ENCODE measurements at regions of chr12 and their contacts with region 1.

Region 1: GRCh38 chr12:96578526-96579125 is 89.2 kb downstream of the CFAP54 start:
- DNase-seq: peak in 3 of 9 experiments; percentile 4 to 76 (median 68)
- ATAC-seq: peak; percentile 81
- H3K4me3 ChIP-seq: no peak overlapping the region
- H3K4me3 Mint-ChIP-seq: no peak overlapping the region
- H3K27ac ChIP-seq: no peak overlapping the region
- H3K27ac Mint-ChIP-seq: no peak overlapping the region
- H3K4me1 ChIP-seq: no peaks in the 10 kb centered on the region
- H3K4me1 Mint-ChIP-seq: no peaks in the 10 kb centered on the region
- H3K27me3 ChIP-seq: no peaks in the 10 kb centered on the region
- H3K27me3 Mint-ChIP-seq: peaks cover 5% of the 10 kb centered on the region
- CTCF ChIP-seq: peak; percentile 80

Region 2: DNA sequence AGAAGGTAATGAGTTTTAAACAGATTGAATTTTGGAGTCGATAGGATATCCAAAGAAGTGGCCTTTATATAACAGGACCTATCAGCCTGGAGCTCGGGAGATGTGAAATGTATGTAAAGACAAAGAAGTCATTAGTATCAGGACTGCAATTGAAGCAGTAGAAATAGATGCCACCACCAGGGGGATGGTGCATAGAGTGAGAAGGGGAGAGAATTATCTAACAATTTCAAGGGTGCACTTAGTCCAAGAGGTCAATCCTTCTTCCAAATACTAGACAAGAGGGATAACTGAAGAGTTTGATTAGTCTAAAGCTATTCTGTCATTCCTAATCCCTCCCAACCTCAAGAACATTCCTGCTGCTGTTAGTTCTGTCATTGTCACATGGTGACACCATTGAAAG is 38.6 kb after region 1 on chr12:
- CTCF ChIA-PET with region 1: no interaction called
- POLR2A ChIA-PET with region 1: no interaction called
- intact Hi-C with region 1: loop called in 1 of 2 experiments (anchors 1 kb)
- DNase-seq: no peak
- ATAC-seq: no peak
- H3K4me3 ChIP-seq: no peak overlapping the region
- H3K4me3 Mint-ChIP-seq: no peak overlapping the region
- H3K27ac ChIP-seq: no peak overlapping the region
- H3K27ac Mint-ChIP-seq: no peak overlapping the region
- H3K4me1 ChIP-seq: no peaks in the 10 kb centered on the region
- H3K4me1 Mint-ChIP-seq: no peaks in the 10 kb centered on the region
- H3K27me3 ChIP-seq: no peaks in the 10 kb centered on the region
- H3K27me3 Mint-ChIP-seq: peaks cover 15% of the 10 kb centered on the region
- CTCF ChIP-seq: no peak

Region 3: DNA sequence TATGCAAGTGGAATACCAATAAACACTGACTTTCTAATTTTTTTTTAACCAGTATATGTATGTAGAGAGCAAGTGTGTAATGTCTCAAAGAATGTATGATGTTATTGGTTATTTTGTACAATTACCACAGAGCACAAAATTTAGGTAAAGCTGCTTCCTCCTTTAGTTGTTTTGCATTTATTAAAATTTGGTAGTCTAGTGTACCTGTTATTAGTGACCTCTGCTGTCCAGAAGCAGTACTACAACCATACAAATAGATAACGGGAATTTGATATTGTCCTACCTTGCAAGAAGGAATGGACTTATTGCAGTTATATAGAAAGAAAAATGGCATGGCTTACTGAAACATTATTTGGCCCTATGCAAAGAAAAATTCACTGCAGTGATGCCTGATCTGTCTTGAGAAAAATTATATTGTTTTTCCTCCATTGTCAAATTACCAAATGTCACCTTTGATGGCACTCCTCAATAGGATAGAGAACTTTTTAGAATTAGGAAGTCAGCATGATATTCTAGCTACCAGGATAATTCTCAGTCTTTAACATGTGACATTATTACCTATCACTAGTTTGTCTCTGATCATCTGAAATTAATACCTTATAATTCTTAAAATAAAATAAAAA is 730.1 kb after region 1 on chr12:
- CTCF ChIA-PET with region 1: interaction called, 72 read pairs
- POLR2A ChIA-PET with region 1: no interaction called
- intact Hi-C with region 1: loop called (anchors 1 kb)
- DNase-seq: peak in 3 of 9 experiments; percentile 16 to 71 (median 64)
- ATAC-seq: peak; percentile 56
- H3K4me3 ChIP-seq: no peak overlapping the region
- H3K4me3 Mint-ChIP-seq: no peak overlapping the region
- H3K27ac ChIP-seq: no peak overlapping the region
- H3K27ac Mint-ChIP-seq: no peak overlapping the region
- H3K4me1 ChIP-seq: no peaks in the 10 kb centered on the region
- H3K4me1 Mint-ChIP-seq: no peaks in the 10 kb centered on the region
- H3K27me3 ChIP-seq: no peaks in the 10 kb centered on the region
- H3K27me3 Mint-ChIP-seq: peaks cover 13% of the 10 kb centered on the region
- CTCF ChIP-seq: peak; percentile 91

Region 4: DNA sequence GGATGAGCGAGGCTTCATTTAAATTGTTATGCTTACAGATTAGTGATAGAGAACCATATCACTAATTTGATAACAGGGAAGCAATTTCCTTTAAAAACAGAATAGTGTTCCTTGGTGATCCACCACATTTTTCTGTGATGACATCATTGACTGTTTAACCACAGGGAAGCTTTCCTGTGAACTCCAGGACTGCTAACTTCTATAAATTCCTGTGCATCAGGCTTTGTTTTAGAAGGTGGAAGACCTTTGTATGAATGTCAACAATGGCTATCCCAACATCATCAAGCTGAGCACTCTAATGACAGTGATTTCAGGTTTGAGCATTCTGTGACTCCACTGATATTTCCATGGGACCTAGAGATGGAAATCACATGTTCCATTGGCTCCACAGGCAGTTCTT is 1061.1 kb after region 1 on chr12:
- CTCF ChIA-PET with region 1: no interaction called
- POLR2A ChIA-PET with region 1: no interaction called
- intact Hi-C with region 1: no loop called
- DNase-seq: no peak
- ATAC-seq: no peak
- H3K4me3 ChIP-seq: no peak overlapping the region
- H3K4me3 Mint-ChIP-seq: no peak overlapping the region
- H3K27ac ChIP-seq: no peak overlapping the region
- H3K27ac Mint-ChIP-seq: no peak overlapping the region
- H3K4me1 ChIP-seq: no peaks in the 10 kb centered on the region
- H3K4me1 Mint-ChIP-seq: no peaks in the 10 kb centered on the region
- H3K27me3 ChIP-seq: no peaks in the 10 kb centered on the region
- H3K27me3 Mint-ChIP-seq: no peaks in the 10 kb centered on the region
- CTCF ChIP-seq: no peak

Region 5: GRCh38 chr12:98002712-98003493 is 1424.3 kb after region 1 on chr12:
- CTCF ChIA-PET with region 1: no interaction called
- POLR2A ChIA-PET with region 1: no interaction called
- intact Hi-C with region 1: loop called in 1 of 2 experiments (anchors 5 kb)
- DNase-seq: peak in 2 of 9 experiments; percentile 5 to 12
- ATAC-seq: no peak
- H3K4me3 ChIP-seq: no peak overlapping the region
- H3K4me3 Mint-ChIP-seq: no peak overlapping the region
- H3K27ac ChIP-seq: no peak overlapping the region
- H3K27ac Mint-ChIP-seq: no peak overlapping the region
- H3K4me1 ChIP-seq: no peaks in the 10 kb centered on the region
- H3K4me1 Mint-ChIP-seq: no peaks in the 10 kb centered on the region
- H3K27me3 ChIP-seq: peaks cover 0 to 4% of the 10 kb centered on the region in 2 experiments
- H3K27me3 Mint-ChIP-seq: peaks cover 4% of the 10 kb centered on the region
- CTCF ChIP-seq: no peak

Region 6: GRCh38 chr12:98532681-98533304 is 1954.2 kb after region 1 on chr12:
- CTCF ChIA-PET with region 1: no interaction called
- POLR2A ChIA-PET with region 1: no interaction called
- intact Hi-C with region 1: loop called in 1 of 2 experiments (anchors 5 kb)
- DNase-seq: peak in 3 of 9 experiments; percentile 12 to 67 (median 54)
- ATAC-seq: peak; percentile 40
- H3K4me3 ChIP-seq: no peak overlapping the region
- H3K4me3 Mint-ChIP-seq: no peak overlapping the region
- H3K27ac ChIP-seq: no peak overlapping the region
- H3K27ac Mint-ChIP-seq: peak overlapping the region; percentile 41
- H3K4me1 ChIP-seq: no peaks in the 10 kb centered on the region
- H3K4me1 Mint-ChIP-seq: peaks cover 13% of the 10 kb centered on the region
- H3K27me3 ChIP-seq: no peaks in the 10 kb centered on the region
- H3K27me3 Mint-ChIP-seq: no peaks in the 10 kb centered on the region
- CTCF ChIP-seq: peak; percentile 59

Measured in CD8-positive, alpha-beta T cell (primary cell).